Pancreas (tissue), 10 donors: ENCODE measurements at regions of chr14 and their contacts with region 1.

Region 1: GRCh38 chr14:69818757-69819191 is 21.7 kb upstream of the SLC10A1 start:
- DNase-seq: peak in 4 of 6 donors; percentile 22 to 72 (median 34)
- ATAC-seq: peak; percentile 69 to 92 (median 90)
- H3K4me3 ChIP-seq: no peak overlapping the region
- H3K27ac ChIP-seq: no peak overlapping the region
- H3K4me1 ChIP-seq: no peaks in the 10 kb centered on the region
- H3K27me3 ChIP-seq: no peaks in the 10 kb centered on the region
- CTCF ChIP-seq: peak; percentile 56 to 80 (median 76)

Region 2: GRCh38 chr14:70027785-70028428 is 209.1 kb after region 1 on chr14:
- intact Hi-C with region 1: loop called (anchors 5 to 10 kb)
- DNase-seq: peak; percentile 40 to 95 (median 76)
- ATAC-seq: peak; percentile 70 to 97 (median 92)
- H3K4me3 ChIP-seq: no peak overlapping the region
- H3K27ac ChIP-seq: no peak overlapping the region
- H3K4me1 ChIP-seq: no peaks in the 10 kb centered on the region
- H3K27me3 ChIP-seq: no peaks in the 10 kb centered on the region
- CTCF ChIP-seq: peak; percentile 80 to 93 (median 83)